Left lung (tissue), 14 donors: ENCODE measurements at regions of chr15 and their contacts with region 1.

Region 1: GRCh38 chr15:36982430-36982829 is 117.9 kb downstream of the MEIS2 start:
- DNase-seq: no peak
- ATAC-seq: no peak
- H3K4me3 ChIP-seq: no peak overlapping the region
- H3K27ac ChIP-seq: no peak overlapping the region
- H3K4me1 ChIP-seq: no peaks in the 10 kb centered on the region
- H3K27me3 ChIP-seq: no peaks in the 10 kb centered on the region
- CTCF ChIP-seq: no peak

Region 2: DNA sequence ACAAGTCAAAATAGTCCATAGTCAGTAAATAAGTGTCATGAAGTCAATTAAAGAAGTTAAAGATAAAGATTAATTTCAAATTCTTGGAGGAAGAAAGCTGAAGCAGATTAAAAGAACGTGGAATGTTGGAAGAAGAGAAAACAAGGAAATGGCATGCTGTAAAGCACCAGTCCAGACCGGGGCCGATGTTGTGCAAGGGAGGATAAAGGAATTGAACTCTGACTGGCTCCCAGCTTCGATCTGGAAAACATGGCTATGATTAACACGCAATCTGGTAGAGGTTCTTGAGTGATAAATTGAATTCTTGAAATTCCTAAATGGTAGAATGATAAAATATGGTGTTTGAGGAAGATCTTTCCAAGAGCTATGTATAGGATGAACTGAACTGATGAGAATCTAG is 76.5 kb before region 1 on chr15:
- intact Hi-C with region 1: loop called in 1 of 2 experiments (anchors 10 kb)
- DNase-seq: no peak
- ATAC-seq: no peak
- H3K4me3 ChIP-seq: no peak overlapping the region
- H3K27ac ChIP-seq: no peak overlapping the region
- H3K4me1 ChIP-seq: no peaks in the 10 kb centered on the region
- H3K27me3 ChIP-seq: no peaks in the 10 kb centered on the region
- CTCF ChIP-seq: no peak

Region 3: DNA sequence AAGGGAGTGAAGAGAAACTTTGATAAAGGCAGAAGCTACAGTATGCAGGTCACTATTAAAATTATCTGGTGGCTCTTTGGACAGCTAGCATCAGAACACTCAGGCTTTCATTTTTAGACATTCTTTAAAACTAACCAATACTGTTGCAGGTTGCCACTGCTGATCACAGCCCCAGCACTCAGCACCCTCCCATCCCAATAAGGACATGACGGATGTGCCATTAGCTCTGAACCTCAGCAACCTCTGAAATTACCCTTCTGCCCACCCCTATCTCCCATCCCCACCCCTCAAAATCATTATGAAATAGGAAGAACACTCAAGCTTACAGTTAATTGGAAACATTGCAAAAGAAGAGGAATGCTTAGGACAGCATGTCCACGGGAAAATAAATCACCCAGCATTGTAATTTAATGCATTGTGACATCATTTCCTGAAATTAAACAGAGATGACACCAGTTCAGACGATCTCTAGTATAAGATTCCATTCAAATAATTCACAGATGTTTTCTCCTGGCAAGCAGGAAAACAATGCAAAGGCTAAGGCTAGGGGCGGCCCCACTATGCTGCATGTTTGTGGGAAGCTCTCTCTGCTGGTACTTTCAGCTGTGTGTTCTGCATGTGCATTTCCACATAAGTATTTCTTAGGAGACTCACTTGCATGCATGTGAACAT is 46.3 kb after region 1 on chr15:
- intact Hi-C with region 1: no loop called
- DNase-seq: no peak
- ATAC-seq: no peak
- H3K4me3 ChIP-seq: no peak overlapping the region
- H3K27ac ChIP-seq: no peak overlapping the region
- H3K4me1 ChIP-seq: no peaks in the 10 kb centered on the region
- H3K27me3 ChIP-seq: no peaks in the 10 kb centered on the region
- CTCF ChIP-seq: no peak

Region 4: GRCh38 chr15:37100109-37100965 is 117.9 kb after region 1 on chr15 and contains the start of gene MEIS2:
- intact Hi-C with region 1: no loop called
- DNase-seq: peak in 3 of 4 donors; percentile 86 to 95 (median 92)
- ATAC-seq: peak; percentile 74
- H3K4me3 ChIP-seq: peak within 1 kb of the TSS; percentile 57 to 70
- H3K27ac ChIP-seq: peak within 1 kb of the TSS; percentile 85 to 91
- H3K4me1 ChIP-seq: peaks cover 3 to 4% of the 10 kb centered on the region in 2 donors
- H3K27me3 ChIP-seq: peaks cover 13 to 100% of the 10 kb centered on the region in 2 donors
- CTCF ChIP-seq: no peak
- polyA plus RNA-seq, gene MEIS2: 34.4 to 44.5 (median 38.9) TPM